ENCODE measurements at regions of chr11 and their contacts with region 1.

Region 1: GRCh38 chr11:65652511-65653231 is 10.0 kb downstream of the RELA start:
- DNase-seq: peak; percentile 71 to 96
- H3K4me3 ChIP-seq: peak overlapping the region; percentile 51 to 62
- H3K27ac ChIP-seq: peak overlapping the region; percentile 89 to 93
- H3K4me1 ChIP-seq: peaks cover 12 to 17% of the 10 kb centered on the region in 2 donors
- H3K27me3 ChIP-seq: no peaks in the 10 kb centered on the region
- CTCF ChIP-seq: no peak

Region 2: GRCh38 chr11:65637794-65638317 is 14.8 kb before region 1 on chr11 and contains the start of gene SIPA1:
- intact Hi-C with region 1: loop called (anchors 1 kb)
- DNase-seq: peak in 1 of 2 donors; percentile 84
- H3K4me3 ChIP-seq: peak within 1 kb of the TSS; percentile 53 to 84
- H3K27ac ChIP-seq: peak within 1 kb of the TSS; percentile 71 to 84
- H3K4me1 ChIP-seq: peaks cover 2 to 10% of the 10 kb centered on the region in 2 donors
- H3K27me3 ChIP-seq: no peaks in the 10 kb centered on the region
- CTCF ChIP-seq: peak in 2 of 3 experiments; percentile 6 to 34
- total RNA-seq, gene SIPA1: 145 TPM

Region 3: DNA sequence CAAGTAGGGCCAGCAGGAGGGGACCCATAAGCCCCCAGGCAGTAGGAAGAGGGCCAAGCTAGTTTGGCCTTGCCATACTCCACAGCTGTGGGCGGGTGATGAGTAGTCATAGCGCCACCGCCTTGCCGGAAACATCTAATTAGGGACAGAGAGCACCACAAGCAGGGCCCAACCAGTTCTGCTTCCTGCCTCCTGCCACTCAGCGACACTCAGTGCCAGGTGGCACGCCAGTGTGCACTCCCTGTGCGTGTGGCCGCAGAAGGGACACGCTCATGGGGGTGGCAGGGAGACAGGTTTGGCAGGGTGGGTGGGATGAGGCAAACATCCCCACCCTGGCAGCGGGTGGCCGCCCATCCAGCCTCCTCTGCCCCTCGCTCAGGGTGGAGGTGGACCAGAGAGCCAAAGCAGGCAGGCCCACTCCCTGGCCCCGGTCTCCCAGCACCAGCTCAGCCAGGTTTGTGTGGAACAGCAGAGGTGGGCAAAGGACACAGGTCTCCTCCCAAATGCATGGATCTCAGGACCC is 139.1 kb after region 1 on chr11:
- intact Hi-C with region 1: no loop called
- DNase-seq: no peak
- H3K4me3 ChIP-seq: no peak overlapping the region
- H3K27ac ChIP-seq: no peak overlapping the region
- H3K4me1 ChIP-seq: peaks cover 0 to 7% of the 10 kb centered on the region in 2 donors
- H3K27me3 ChIP-seq: peaks cover 14% of the 10 kb centered on the region
- CTCF ChIP-seq: no peak

Region 4: GRCh38 chr11:65911682-65912568 is 259.3 kb after region 1 on chr11:
- intact Hi-C with region 1: no loop called
- DNase-seq: peak in 1 of 2 donors; percentile 90
- H3K4me3 ChIP-seq: no peak overlapping the region
- H3K27ac ChIP-seq: peak overlapping the region; percentile 35 to 72
- H3K4me1 ChIP-seq: peaks cover 21 to 42% of the 10 kb centered on the region in 2 donors
- H3K27me3 ChIP-seq: no peaks in the 10 kb centered on the region
- CTCF ChIP-seq: peak; percentile 43 to 53 (median 47)

Measured in ascending aorta (tissue), 2 donors.